PC-9 (cell line): ENCODE measurements at regions of chr5 and their contacts with region 1.

Region 1: GRCh38 chr5:112419986-112420864 is 1.1 kb upstream of the EPB41L4A start:
- DNase-seq: peak; percentile 60 to 82
- H3K4me3 ChIP-seq: peak overlapping the region; percentile 66
- H3K27ac ChIP-seq: no peak overlapping the region
- H3K4me1 ChIP-seq: no peaks in the 10 kb centered on the region
- H3K27me3 ChIP-seq: peaks cover 37% of the 10 kb centered on the region
- CTCF ChIP-seq: peak; percentile 78

Region 2: DNA sequence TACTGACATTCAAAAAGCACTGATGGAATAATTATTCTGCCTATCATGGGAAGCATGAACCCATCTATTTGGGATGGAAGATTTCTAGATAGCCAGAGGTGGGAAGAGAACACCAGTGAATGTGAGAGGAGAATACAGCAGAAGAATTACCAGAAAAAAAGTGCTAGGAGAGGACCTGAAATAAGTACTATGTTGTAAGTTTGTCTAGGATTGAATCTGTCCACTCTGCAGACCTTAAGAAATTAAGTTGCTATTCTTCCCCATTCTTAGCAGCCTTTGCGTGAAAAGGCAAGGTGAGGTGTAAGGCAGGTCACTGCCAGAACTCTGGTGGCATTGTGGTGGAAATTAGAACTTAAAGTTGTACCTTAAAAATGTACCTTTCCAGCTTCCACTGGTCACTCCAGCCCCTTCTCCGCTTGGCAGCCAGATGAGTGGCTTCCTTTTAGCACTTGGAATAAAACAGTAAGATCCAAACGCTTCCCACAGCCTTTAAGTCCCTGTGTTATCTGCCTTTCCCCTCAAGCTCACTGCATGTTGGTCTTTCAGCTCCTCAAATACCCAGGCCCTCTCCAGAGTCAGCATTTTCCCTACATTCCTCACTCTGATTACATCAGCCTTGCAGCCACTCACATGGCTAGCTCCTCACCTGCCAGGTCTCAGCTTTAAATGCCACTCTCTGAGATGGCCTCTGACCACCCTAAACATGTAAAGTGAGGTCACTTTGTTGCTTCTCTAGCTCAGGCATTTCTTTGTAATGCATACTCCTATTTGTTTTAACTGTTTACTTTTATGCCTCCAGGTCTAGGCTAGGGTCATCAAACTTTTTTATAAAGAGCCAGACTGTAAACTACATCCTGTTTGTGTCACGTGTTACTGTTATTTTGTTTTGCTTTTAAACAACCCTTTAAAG is 254.1 kb before region 1 on chr5:
- CTCF ChIA-PET with region 1: interaction called, 11 read pairs
- POLR2A ChIA-PET with region 1: interaction called, 21 read pairs
- intact Hi-C with region 1: no loop called
- DNase-seq: no peak
- H3K4me3 ChIP-seq: no peak overlapping the region
- H3K27ac ChIP-seq: peak overlapping the region; percentile 54
- H3K4me1 ChIP-seq: peaks cover 16% of the 10 kb centered on the region
- H3K27me3 ChIP-seq: no peaks in the 10 kb centered on the region
- CTCF ChIP-seq: no peak

Region 3: DNA sequence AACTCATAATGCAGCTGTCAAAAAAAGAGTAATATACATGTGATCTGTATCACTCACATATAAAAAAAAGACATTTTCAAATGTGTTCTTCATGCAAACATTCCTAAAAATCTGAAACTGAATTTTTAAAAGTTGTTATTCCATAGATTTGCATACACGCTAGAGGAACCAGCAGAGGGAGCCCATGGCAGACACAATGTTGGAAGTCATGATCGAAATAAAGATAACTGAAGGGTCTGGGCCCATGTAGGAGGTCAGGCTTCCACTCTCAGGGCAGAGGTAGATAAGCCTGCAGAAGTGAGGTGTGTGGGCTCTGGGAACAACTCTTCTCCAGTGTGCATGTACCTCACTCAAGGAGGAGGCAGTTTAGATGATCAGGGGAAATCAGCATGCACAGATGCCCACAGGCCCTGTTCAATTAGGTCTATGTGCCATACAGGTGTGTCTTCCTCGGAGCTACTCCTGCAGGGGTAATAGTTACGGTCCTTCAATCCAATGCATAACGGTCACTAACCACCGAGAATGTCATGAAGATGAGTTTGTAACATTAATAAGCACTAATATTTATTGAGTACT is 209.7 kb before region 1 on chr5:
- CTCF ChIA-PET with region 1: interaction called, 3 read pairs
- POLR2A ChIA-PET with region 1: no interaction called
- intact Hi-C with region 1: loop called (anchors 1 kb)
- DNase-seq: peak in 1 of 2 experiments; percentile 36
- H3K4me3 ChIP-seq: no peak overlapping the region
- H3K27ac ChIP-seq: no peak overlapping the region
- H3K4me1 ChIP-seq: no peaks in the 10 kb centered on the region
- H3K27me3 ChIP-seq: no peaks in the 10 kb centered on the region
- CTCF ChIP-seq: peak; percentile 76

Region 4: DNA sequence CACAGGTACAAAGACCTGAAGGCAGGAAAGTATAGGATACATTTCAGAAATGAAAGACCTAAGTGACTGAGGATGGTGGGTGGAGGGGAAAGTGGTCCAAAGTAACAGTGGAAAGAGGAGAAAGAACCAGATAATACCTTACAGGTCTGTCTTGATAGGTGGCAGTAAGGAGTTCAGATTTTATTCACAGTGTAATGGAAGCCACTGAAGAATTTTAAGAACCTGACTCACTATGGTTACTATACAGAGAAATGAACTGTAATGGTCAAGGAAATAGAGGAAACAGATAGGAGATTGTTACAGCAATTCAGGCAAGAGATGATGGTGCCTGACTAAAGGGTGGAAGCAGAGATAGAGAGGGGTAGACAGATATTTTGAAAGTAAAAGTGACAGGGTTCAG is 47.7 kb before region 1 on chr5:
- CTCF ChIA-PET with region 1: interaction called, 3 read pairs
- POLR2A ChIA-PET with region 1: no interaction called
- intact Hi-C with region 1: loop called (anchors 5 kb)
- DNase-seq: no peak
- H3K4me3 ChIP-seq: no peak overlapping the region
- H3K27ac ChIP-seq: no peak overlapping the region
- H3K4me1 ChIP-seq: no peaks in the 10 kb centered on the region
- H3K27me3 ChIP-seq: no peaks in the 10 kb centered on the region
- CTCF ChIP-seq: no peak; the same call in 1 of the 2 replicates